Pancreas (tissue), 10 donors: ENCODE measurements at regions of chr9 and their contacts with region 1.

Region 1: GRCh38 chr9:113309204-113309813 is 6.1 kb upstream of the RNF183 start:
- DNase-seq: peak in 2 of 6 donors; percentile 27 to 38
- ATAC-seq: peak in 3 of 4 donors; percentile 82 to 88 (median 86)
- H3K4me3 ChIP-seq: no peak overlapping the region
- H3K27ac ChIP-seq: no peak overlapping the region
- H3K4me1 ChIP-seq: no peaks in the 10 kb centered on the region
- H3K27me3 ChIP-seq: no peaks in the 10 kb centered on the region
- CTCF ChIP-seq: peak in 3 of 4 donors; percentile 35 to 42 (median 40)

Region 2: GRCh38 chr9:113409883-113410206 is 100.5 kb after region 1 on chr9:
- intact Hi-C with region 1: loop called in 2 of 3 experiments (anchors 5 to 10 kb)
- DNase-seq: no peak
- ATAC-seq: peak in 1 of 4 donors; percentile 5
- H3K4me3 ChIP-seq: peak overlapping the region; percentile 53 to 89 (median 74)
- H3K27ac ChIP-seq: peak overlapping the region; percentile 81 to 98 (median 90)
- H3K4me1 ChIP-seq: peaks cover 5 to 13% (median 10%) of the 10 kb centered on the region in 3 donors
- H3K27me3 ChIP-seq: no peaks in the 10 kb centered on the region
- CTCF ChIP-seq: no peak

Region 3: GRCh38 chr9:113654549-113655193 is 345.4 kb after region 1 on chr9:
- intact Hi-C with region 1: no loop called
- DNase-seq: peak in 1 of 6 donors; percentile 38
- ATAC-seq: peak in 3 of 4 donors; percentile 15 to 21 (median 20)
- H3K4me3 ChIP-seq: no peak overlapping the region
- H3K27ac ChIP-seq: no peak overlapping the region
- H3K4me1 ChIP-seq: no peaks in the 10 kb centered on the region
- H3K27me3 ChIP-seq: no peaks in the 10 kb centered on the region
- CTCF ChIP-seq: no peak

Region 4: DNA sequence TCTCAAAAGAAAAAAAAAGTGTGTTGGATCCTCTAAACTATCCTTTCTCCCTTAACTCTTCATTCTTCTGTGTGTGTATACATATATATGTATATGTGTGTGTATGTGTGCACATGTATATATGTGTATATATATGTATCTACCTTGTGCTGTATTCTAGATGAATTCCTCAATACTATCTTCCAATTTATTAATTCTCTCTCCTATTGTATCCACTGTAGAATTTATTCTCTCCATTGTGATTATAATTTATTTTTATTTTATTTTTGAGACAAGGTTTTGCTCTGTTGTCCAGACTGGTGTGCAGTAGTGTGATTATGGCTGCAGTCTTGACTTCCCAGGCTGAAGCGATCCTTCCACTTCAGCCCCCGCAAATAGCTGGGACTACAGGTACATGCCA is 419.7 kb after region 1 on chr9:
- intact Hi-C with region 1: no loop called
- DNase-seq: no peak
- ATAC-seq: no peak
- H3K4me3 ChIP-seq: no peak overlapping the region
- H3K27ac ChIP-seq: no peak overlapping the region
- H3K4me1 ChIP-seq: no peaks in the 10 kb centered on the region
- H3K27me3 ChIP-seq: no peaks in the 10 kb centered on the region
- CTCF ChIP-seq: no peak